GM12878 (cell line): ENCODE measurements at regions of chr7 and their contacts with region 1.

Region 1: DNA sequence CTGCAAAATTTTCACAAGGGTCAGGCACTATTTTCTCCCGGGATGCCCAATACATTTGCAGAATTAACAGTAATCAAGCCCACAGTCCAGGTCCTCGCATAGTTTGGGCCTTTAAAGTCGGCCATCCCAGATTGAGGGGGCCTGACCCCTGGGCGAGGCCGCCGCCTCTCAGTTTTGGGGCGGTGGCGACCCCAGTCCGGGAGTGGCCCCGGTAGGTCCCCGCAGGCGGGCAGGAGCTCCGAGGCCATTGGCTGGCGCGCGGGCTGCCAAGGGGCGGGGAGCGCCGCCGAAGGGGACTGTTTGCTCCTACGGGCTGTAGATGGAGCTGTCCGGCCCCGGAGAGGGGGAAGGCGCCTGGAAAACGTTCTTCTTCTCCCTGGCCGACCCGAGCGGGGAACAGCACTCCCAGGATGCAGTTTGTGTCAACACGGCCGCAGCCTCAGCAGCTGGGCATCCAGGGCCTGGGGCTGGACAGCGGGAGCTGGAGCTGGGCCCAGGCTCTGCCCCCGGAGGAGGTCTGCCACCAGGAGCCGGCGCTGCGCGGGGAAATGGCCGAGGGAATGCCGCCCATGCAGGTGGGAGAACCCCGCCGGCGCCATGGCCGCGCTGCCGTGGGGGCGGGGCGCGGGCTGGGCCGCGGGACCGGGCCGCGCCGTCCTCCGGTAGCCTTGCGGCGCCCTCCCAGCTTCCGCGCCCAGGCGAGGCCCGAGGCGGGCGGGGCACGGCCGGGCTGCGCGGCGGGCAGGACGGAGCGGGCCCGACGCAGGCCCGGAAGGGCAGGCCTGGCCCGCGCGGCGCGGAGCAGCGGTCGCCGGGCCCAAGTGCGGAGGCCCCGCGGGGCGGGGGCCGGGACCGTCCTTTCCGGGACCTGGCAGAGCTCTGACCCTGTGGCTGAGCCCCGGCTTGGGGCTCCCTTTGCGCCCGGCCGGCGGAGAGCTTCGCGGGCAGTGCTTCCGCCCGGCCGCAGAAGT is at the start of gene ZNF282:
- DNase-seq: peak; percentile 31
- ATAC-seq: peak; percentile 94
- H3K4me3 ChIP-seq: peak within 1 kb of the TSS; percentile 89
- H3K27ac ChIP-seq: peak within 1 kb of the TSS; percentile 82
- H3K4me1 ChIP-seq: 0 out of 2 replicates have a peak, but pooled peaks cover 3% of the 10 kb centered on the region
- H3K27me3 ChIP-seq: no peaks in the 10 kb centered on the region
- CTCF ChIP-seq: peak; percentile 52 to 70 (median 68)
- EP300 ChIP-seq: no peak
- POLR2A ChIP-seq: peak; percentile 88
- RAD21 ChIP-seq: peak; percentile 38; the same call in 1 of the 2 replicates
- polyA plus RNA-seq, gene ZNF282: 0.35 to 0.84 TPM

Region 2: DNA sequence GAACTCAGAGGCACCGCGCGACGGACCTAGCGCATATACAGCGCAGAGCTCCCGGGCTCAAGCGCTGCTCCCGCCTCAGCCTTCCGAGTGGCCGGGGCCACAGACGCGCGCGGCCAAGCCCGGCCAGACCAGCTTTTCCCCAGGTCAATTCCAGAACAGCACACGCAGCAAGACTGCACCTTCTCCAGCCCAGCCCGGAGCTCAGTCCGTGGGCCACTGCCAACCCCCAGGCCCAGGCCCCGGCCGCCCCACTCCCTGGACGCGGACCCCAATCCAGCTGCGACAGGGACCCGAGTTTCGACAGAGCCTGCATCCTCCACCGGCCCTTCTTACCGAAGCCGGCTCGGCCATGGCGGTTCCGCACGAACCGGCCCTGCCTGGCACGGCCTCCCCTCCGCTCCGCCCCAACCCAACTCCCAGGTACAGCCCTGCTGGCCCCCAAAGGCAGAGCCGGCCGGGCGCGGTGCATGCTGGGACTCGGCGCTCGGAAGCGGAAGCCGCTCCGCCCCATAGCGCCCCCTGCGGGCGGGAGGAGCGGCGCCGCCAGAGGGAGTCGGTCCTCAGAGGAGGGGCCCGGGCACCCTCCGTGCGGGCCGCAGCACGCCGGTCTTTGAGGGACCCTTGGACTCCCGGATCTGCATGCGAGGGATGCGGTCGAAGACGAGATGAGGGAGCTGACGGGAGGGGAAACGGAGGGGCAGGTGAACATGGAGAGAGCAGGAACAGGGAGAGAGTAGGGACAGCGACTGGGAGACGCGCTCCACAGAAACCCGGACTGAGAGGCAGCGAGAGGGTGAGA is 69.4 kb before region 1 on chr7 and contains the start of gene ZNF425:
- CTCF ChIA-PET with region 1: interaction called, 3 read pairs
- POLR2A ChIA-PET with region 1: interaction called, 3 read pairs
- RAD21 ChIA-PET with region 1: interaction called, 5 read pairs
- SMC1A ChIA-PET with region 1: no interaction called
- in situ Hi-C with region 1: no loop called
- intact Hi-C with region 1: loop called (anchors 1 kb)
- DNase-seq: peak; percentile 66
- ATAC-seq: peak; percentile 92
- H3K4me3 ChIP-seq: peak within 1 kb of the TSS; percentile 96
- H3K27ac ChIP-seq: peak within 1 kb of the TSS; percentile 90
- H3K4me1 ChIP-seq: no peaks in the 10 kb centered on the region
- H3K27me3 ChIP-seq: no peaks in the 10 kb centered on the region
- CTCF ChIP-seq: peak; percentile 87 to 96 (median 92)
- EP300 ChIP-seq: no peak
- POLR2A ChIP-seq: peak; percentile 99
- RAD21 ChIP-seq: peak; percentile 32; the same call in 1 of the 2 replicates
- polyA plus RNA-seq, gene ZNF425: 0.19 to 0.20 TPM

Region 3: GRCh38 chr7:149136118-149136517 is 59.3 kb before region 1 on chr7:
- CTCF ChIA-PET with region 1: no interaction called
- POLR2A ChIA-PET with region 1: no interaction called
- RAD21 ChIA-PET with region 1: no interaction called
- SMC1A ChIA-PET with region 1: no interaction called
- in situ Hi-C with region 1: no loop called
- intact Hi-C with region 1: no loop called
- DNase-seq: no peak
- ATAC-seq: no peak
- H3K4me3 ChIP-seq: no peak overlapping the region
- H3K27ac ChIP-seq: no peak overlapping the region
- H3K4me1 ChIP-seq: no peaks in the 10 kb centered on the region
- H3K27me3 ChIP-seq: no peaks in the 10 kb centered on the region
- CTCF ChIP-seq: no peak
- EP300 ChIP-seq: no peak
- POLR2A ChIP-seq: no peak
- RAD21 ChIP-seq: no peak

Region 4: DNA sequence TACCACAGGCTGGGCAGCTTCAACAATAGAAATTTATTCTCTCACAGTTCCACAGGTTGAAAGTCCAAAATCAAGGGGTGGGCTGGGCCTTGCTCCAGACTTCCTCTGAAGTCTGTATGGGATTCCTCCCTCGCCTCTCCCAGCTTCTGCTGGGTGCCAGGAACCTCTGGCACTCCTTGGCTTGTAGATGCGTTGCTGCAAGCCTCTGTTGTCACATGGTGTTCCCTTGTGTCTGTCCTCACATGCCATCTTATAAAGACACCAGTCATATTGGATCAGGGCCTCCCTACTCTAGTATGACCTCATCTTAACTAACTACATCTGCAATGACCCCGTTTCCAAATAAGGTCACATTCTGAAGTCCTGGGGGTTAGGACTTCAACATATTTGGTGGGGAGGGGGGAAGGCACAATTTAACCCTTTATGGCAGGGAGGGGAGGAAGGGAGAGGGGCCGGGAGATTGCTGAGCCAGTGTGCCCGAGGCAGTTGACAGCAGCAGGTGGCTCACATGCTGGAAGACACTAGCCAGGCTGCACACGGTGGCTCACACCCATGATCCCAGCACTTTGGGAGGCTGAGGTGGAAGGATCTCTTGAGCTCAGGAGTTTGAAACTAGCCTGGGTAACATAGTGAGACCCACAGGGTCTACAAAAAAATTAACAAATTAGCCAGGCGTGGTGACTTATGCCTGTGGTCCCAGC is 18.7 kb after region 1 on chr7:
- CTCF ChIA-PET with region 1: interaction called, 5 read pairs
- POLR2A ChIA-PET with region 1: no interaction called
- RAD21 ChIA-PET with region 1: no interaction called
- SMC1A ChIA-PET with region 1: interaction called, 3 read pairs
- in situ Hi-C with region 1: no loop called
- intact Hi-C with region 1: loop called (anchors 2 kb)
- DNase-seq: no peak
- ATAC-seq: no peak
- H3K4me3 ChIP-seq: no peak overlapping the region
- H3K27ac ChIP-seq: no peak overlapping the region
- H3K4me1 ChIP-seq: no peaks in the 10 kb centered on the region
- H3K27me3 ChIP-seq: no peaks in the 10 kb centered on the region
- CTCF ChIP-seq: no peak
- EP300 ChIP-seq: no peak
- POLR2A ChIP-seq: no peak
- RAD21 ChIP-seq: no peak

Region 5: DNA sequence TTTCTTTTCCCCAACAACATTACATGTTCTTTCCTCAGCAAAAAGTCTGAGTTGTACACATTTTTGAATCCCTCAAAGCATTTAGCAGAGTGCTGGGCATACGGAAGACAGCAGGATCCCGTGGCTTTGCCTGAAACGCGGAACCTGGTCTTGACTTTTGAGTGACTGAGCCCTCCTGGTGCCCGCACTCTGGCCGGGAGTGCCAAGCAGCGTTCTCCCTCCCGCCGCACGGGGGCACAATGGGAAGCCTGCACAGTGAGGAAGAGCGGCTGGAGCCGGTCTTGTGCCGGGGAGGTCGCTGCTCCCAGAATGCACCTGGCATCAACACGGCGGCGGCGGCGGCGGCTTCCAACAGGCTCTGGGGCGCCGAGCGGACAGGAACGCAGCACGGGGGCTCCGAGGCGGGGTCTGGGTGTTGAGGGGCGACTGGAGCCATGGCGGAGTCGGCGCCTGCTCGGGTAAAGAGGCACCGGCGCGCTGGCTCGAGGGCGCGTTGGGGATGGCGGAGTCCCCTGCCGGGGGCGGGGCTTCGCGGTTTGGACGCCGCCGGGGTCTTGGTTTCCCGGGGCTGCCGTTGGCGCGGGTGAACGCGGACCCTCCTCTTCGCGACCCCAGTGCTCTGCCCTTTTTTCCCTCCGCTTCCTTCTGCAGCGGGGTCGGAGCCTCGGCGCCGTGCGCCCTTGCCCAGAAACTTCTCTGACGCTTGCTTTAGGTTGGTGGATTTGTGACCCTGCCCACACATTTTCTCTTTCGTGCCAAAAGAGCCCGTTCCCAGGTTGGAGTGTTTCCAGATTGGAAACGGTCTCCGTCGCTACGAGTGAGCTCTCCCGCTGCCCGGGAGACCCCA is 44.1 kb after region 1 on chr7 and contains the start of gene ZNF212:
- CTCF ChIA-PET with region 1: interaction called, 4 read pairs
- POLR2A ChIA-PET with region 1: interaction called, 3 read pairs
- RAD21 ChIA-PET with region 1: interaction called, 3 read pairs
- SMC1A ChIA-PET with region 1: interaction called, 3 read pairs
- in situ Hi-C with region 1: no loop called
- intact Hi-C with region 1: loop called (anchors 5 kb)
- DNase-seq: peak; percentile 56
- ATAC-seq: peak; percentile 99
- H3K4me3 ChIP-seq: peak within 1 kb of the TSS; percentile 99
- H3K27ac ChIP-seq: peak within 1 kb of the TSS; percentile 73
- H3K4me1 ChIP-seq: peaks cover 10% of the 10 kb centered on the region
- H3K27me3 ChIP-seq: no peaks in the 10 kb centered on the region
- CTCF ChIP-seq: peak; percentile 87 to 96 (median 92); a peak in 5 of 6 replicates
- EP300 ChIP-seq: no peak
- POLR2A ChIP-seq: peak; percentile 84
- RAD21 ChIP-seq: peak; percentile 51
- polyA plus RNA-seq, gene ZNF212: 1.2 to 2.1 TPM